Left lung (tissue), 14 donors: ENCODE measurements at regions of chr20 and their contacts with region 1.

Region 1: DNA sequence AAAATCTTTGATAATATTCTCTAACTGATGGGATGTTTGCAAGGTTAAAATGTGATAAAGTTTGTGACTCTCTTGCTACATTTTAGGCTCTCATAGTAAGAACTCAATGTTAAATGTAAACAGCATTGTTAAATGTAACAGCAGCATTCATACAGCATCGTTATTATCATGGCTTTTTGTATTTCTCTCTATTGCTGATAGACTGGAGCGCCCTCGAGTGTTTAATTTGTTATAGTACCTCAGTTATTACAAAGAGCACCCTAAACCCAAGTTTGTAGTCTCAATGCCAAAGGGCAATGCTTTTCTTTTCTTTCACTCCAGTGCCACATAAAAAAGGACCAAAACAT is 14.9 kb upstream of the TTPAL start:
- DNase-seq: peak in 1 of 4 donors; percentile 48
- ATAC-seq: peak; percentile 49
- H3K4me3 ChIP-seq: no peak overlapping the region
- H3K27ac ChIP-seq: no peak overlapping the region
- H3K4me1 ChIP-seq: no peaks in the 10 kb centered on the region
- H3K27me3 ChIP-seq: no peaks in the 10 kb centered on the region
- CTCF ChIP-seq: peak in 1 of 2 donors; percentile 33

Region 2: GRCh38 chr20:44210422-44211176 is 250.2 kb before region 1 on chr20 and contains the start of gene OSER1:
- intact Hi-C with region 1: loop called in 1 of 2 experiments (anchors 10 kb)
- DNase-seq: peak; percentile 96 to 99 (median 98)
- ATAC-seq: peak; percentile 93
- H3K4me3 ChIP-seq: peak within 1 kb of the TSS; percentile 93 to 98
- H3K27ac ChIP-seq: peak within 1 kb of the TSS; percentile 96 to 97
- H3K4me1 ChIP-seq: peaks cover 27 to 61% of the 10 kb centered on the region in 2 donors
- H3K27me3 ChIP-seq: no peaks in the 10 kb centered on the region
- CTCF ChIP-seq: peak in 1 of 2 donors; percentile 17
- polyA plus RNA-seq, gene OSER1: 34.4 to 44.8 (median 39.3) TPM

Region 3: GRCh38 chr20:45114465-45115385 is 654.0 kb after region 1 on chr20 and contains the start of gene WFDC5:
- intact Hi-C with region 1: no loop called
- DNase-seq: no peak
- ATAC-seq: no peak
- H3K4me3 ChIP-seq: no peak within 1 kb of the TSS
- H3K27ac ChIP-seq: no peak within 1 kb of the TSS
- H3K4me1 ChIP-seq: no peaks in the 10 kb centered on the region
- H3K27me3 ChIP-seq: peaks cover 0 to 39% of the 10 kb centered on the region in 2 donors
- CTCF ChIP-seq: no peak
- polyA plus RNA-seq, gene WFDC5: not detected